CD4-positive, alpha-beta T cell (primary cell): ENCODE measurements at regions of chr10 and their contacts with region 1.

Region 1: GRCh38 chr10:31318854-31319601 is at the start of gene ZEB1:
- DNase-seq: peak; percentile 78 to 97 (median 88)
- ATAC-seq: peak; percentile 40
- H3K4me3 ChIP-seq: peak within 1 kb of the TSS; percentile 81
- H3K4me3 Mint-ChIP-seq: peak within 1 kb of the TSS; percentile 98
- H3K27ac ChIP-seq: peak within 1 kb of the TSS; percentile 80 to 98
- H3K27ac Mint-ChIP-seq: peak within 1 kb of the TSS; percentile 94
- H3K4me1 ChIP-seq: peaks cover 10% of the 10 kb centered on the region
- H3K4me1 Mint-ChIP-seq: peaks cover 45% of the 10 kb centered on the region
- H3K27me3 ChIP-seq: no peaks in the 10 kb centered on the region
- H3K27me3 Mint-ChIP-seq: no peaks in the 10 kb centered on the region
- CTCF ChIP-seq: peak; percentile 33
- total RNA-seq, gene ZEB1: 132 to 134 TPM

Region 2: GRCh38 chr10:30701451-30702173 is 617.4 kb before region 1 on chr10:
- CTCF ChIA-PET with region 1: no interaction called
- POLR2A ChIA-PET with region 1: interaction called, 3 read pairs
- intact Hi-C with region 1: loop called (anchors 10 kb)
- DNase-seq: peak; percentile 41 to 87 (median 62)
- ATAC-seq: peak; percentile 65
- H3K4me3 ChIP-seq: peak overlapping the region; percentile 43
- H3K4me3 Mint-ChIP-seq: peak overlapping the region; percentile 85
- H3K27ac ChIP-seq: peak overlapping the region; percentile 51 to 74
- H3K27ac Mint-ChIP-seq: peak overlapping the region; percentile 99
- H3K4me1 ChIP-seq: peaks cover 81% of the 10 kb centered on the region
- H3K4me1 Mint-ChIP-seq: peaks cover 87% of the 10 kb centered on the region
- H3K27me3 ChIP-seq: no peaks in the 10 kb centered on the region
- H3K27me3 Mint-ChIP-seq: no peaks in the 10 kb centered on the region
- CTCF ChIP-seq: no peak

Region 3: DNA sequence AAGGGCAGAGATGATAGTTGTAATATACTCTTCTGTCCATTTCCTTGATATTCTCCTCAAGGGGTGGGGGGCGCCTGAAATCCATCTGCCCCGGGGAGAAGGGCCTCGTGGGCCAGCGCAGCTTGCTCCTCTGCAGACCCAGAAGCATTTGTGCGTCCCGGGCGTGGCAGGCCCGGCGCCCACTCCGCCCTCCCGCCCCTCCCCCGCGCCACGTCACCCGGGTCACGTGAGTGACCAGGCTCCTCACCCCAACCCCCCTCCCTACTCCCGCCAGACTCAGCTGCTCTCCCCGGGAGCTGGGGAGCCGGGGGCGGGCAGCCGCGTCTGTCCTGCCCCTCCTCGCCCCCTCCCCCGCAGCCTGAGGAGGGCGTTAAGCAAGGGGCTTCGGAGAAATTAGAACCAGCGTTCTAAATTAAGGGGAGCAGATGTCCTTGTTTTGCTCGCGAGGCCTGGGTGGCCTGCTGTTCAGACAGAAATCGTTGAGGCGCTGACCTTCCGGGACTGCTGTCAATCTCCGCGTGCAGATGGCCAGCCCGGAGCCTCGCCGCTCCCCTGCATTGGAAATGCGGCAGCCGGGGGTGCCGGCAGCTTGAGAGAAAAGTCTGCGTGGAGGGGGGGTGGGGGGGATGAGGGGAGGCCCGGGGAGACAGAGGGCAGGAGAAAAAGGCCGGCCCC is 185.3 kb before region 1 on chr10:
- CTCF ChIA-PET with region 1: no interaction called
- POLR2A ChIA-PET with region 1: interaction called, 5 read pairs
- intact Hi-C with region 1: loop called (anchors 5 kb)
- DNase-seq: peak; percentile 45 to 85 (median 66)
- ATAC-seq: peak; percentile 63
- H3K4me3 ChIP-seq: peak overlapping the region; percentile 83
- H3K4me3 Mint-ChIP-seq: peak overlapping the region; percentile 84
- H3K27ac ChIP-seq: peak overlapping the region in 1 of 2 donors; percentile 45
- H3K27ac Mint-ChIP-seq: peak overlapping the region; percentile 86
- H3K4me1 ChIP-seq: peaks cover 41% of the 10 kb centered on the region
- H3K4me1 Mint-ChIP-seq: peaks cover 50% of the 10 kb centered on the region
- H3K27me3 ChIP-seq: no peaks in the 10 kb centered on the region
- H3K27me3 Mint-ChIP-seq: no peaks in the 10 kb centered on the region
- CTCF ChIP-seq: no peak

Region 4: GRCh38 chr10:31353574-31353973 is 34.5 kb after region 1 on chr10:
- CTCF ChIA-PET with region 1: no interaction called
- POLR2A ChIA-PET with region 1: interaction called, 4 read pairs
- intact Hi-C with region 1: loop called (anchors 2 kb)
- DNase-seq: peak in 5 of 14 experiments; percentile 7 to 58 (median 35)
- ATAC-seq: peak; percentile 79
- H3K4me3 ChIP-seq: no peak overlapping the region
- H3K4me3 Mint-ChIP-seq: no peak overlapping the region
- H3K27ac ChIP-seq: no peak overlapping the region
- H3K27ac Mint-ChIP-seq: no peak overlapping the region
- H3K4me1 ChIP-seq: peaks cover 4% of the 10 kb centered on the region
- H3K4me1 Mint-ChIP-seq: peaks cover 75% of the 10 kb centered on the region
- H3K27me3 ChIP-seq: no peaks in the 10 kb centered on the region
- H3K27me3 Mint-ChIP-seq: no peaks in the 10 kb centered on the region
- CTCF ChIP-seq: peak; percentile 41

Region 5: DNA sequence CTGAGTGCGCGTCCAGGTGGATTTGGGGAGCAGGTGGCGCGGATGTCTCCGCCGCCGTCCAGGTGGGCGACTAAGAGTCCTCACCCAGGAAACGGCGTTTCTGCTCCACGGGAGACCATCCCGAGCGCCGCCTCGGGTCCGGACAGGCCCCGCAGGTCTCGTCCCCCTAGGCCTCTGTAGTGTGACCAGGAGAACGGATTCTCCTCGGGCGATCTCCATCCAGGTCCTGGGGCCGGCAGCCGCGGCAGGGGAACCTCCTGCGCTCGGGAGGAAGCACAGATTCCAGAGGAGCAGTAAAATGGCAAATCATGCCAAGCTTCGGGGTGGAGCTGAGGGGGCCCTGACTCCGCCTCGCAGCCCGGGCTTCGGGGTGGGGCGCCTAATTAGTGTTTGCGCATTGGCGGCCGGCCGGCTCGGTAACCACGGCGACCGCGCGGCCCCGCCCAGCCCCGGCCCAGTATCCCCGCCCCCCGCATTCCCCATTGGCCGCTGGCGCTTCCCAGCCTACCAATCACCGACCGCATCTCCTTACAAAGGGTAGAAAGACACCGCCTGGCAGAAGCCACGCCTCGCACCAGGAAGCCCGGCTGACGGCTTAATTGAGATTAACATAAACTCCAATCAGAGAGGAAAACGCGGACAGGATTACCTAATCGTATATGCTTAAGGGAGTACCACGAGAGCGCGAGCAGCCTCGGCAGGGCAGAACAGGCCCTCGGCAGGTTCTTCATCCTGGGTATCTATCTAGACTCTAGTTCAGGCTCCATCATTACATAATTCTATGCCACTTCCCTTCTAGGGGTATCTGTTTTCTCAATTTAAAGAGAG is 441.0 kb after region 1 on chr10:
- CTCF ChIA-PET with region 1: no interaction called
- POLR2A ChIA-PET with region 1: interaction called, 5 read pairs
- intact Hi-C with region 1: loop called (anchors 2 to 5 kb)
- DNase-seq: peak; percentile 90 to 99 (median 94)
- ATAC-seq: peak; percentile 92
- H3K4me3 ChIP-seq: peak overlapping the region; percentile 99
- H3K4me3 Mint-ChIP-seq: peak overlapping the region; percentile 88
- H3K27ac ChIP-seq: peak overlapping the region; percentile 87 to 92
- H3K27ac Mint-ChIP-seq: peak overlapping the region; percentile 96
- H3K4me1 ChIP-seq: peaks cover 19% of the 10 kb centered on the region
- H3K4me1 Mint-ChIP-seq: peaks cover 19% of the 10 kb centered on the region
- H3K27me3 ChIP-seq: no peaks in the 10 kb centered on the region
- H3K27me3 Mint-ChIP-seq: no peaks in the 10 kb centered on the region
- CTCF ChIP-seq: no peak

Region 6: GRCh38 chr10:31928549-31929260 is 609.7 kb after region 1 on chr10 and contains the start of gene ARHGAP12:
- CTCF ChIA-PET with region 1: no interaction called
- POLR2A ChIA-PET with region 1: no interaction called
- intact Hi-C with region 1: loop called in 1 of 2 experiments (anchors 5 kb)
- DNase-seq: peak; percentile 70 to 92 (median 82)
- ATAC-seq: peak; percentile 63
- H3K4me3 ChIP-seq: peak within 1 kb of the TSS; percentile 99
- H3K4me3 Mint-ChIP-seq: peak within 1 kb of the TSS; percentile 97
- H3K27ac ChIP-seq: peak within 1 kb of the TSS; percentile 69 to 77
- H3K27ac Mint-ChIP-seq: peak within 1 kb of the TSS; percentile 82
- H3K4me1 ChIP-seq: peaks cover 23% of the 10 kb centered on the region
- H3K4me1 Mint-ChIP-seq: peaks cover 53% of the 10 kb centered on the region
- H3K27me3 ChIP-seq: no peaks in the 10 kb centered on the region
- H3K27me3 Mint-ChIP-seq: no peaks in the 10 kb centered on the region
- CTCF ChIP-seq: no peak
- total RNA-seq, gene ARHGAP12: 40.3 to 41.1 TPM

Region 7: DNA sequence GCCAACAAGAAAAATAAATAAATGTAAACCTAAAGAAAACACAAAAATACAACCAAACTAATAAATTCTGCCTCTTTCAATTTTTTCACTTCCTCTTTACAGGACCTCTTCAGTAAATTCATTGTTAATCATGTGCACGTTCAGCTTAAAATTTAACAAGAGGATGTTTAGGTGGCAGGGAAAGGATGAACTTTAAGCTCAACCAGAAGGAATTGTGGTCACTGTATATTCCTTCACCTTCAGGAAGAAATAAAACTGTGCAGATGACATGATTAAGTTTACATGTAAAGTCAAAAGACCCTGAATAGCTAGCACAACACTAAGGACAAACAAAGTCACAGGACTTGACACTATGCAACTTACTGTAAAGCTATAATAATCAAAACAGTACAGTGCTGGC is 704.2 kb after region 1 on chr10:
- CTCF ChIA-PET with region 1: no interaction called
- POLR2A ChIA-PET with region 1: no interaction called
- intact Hi-C with region 1: no loop called
- DNase-seq: no peak
- ATAC-seq: no peak
- H3K4me3 ChIP-seq: no peak overlapping the region
- H3K4me3 Mint-ChIP-seq: no peak overlapping the region
- H3K27ac ChIP-seq: no peak overlapping the region
- H3K27ac Mint-ChIP-seq: no peak overlapping the region
- H3K4me1 ChIP-seq: no peaks in the 10 kb centered on the region
- H3K4me1 Mint-ChIP-seq: peaks cover 4% of the 10 kb centered on the region
- H3K27me3 ChIP-seq: no peaks in the 10 kb centered on the region
- H3K27me3 Mint-ChIP-seq: no peaks in the 10 kb centered on the region
- CTCF ChIP-seq: no peak